H1 (cell line): ENCODE measurements at regions of chr6 and their contacts with region 1.

Region 1: DNA sequence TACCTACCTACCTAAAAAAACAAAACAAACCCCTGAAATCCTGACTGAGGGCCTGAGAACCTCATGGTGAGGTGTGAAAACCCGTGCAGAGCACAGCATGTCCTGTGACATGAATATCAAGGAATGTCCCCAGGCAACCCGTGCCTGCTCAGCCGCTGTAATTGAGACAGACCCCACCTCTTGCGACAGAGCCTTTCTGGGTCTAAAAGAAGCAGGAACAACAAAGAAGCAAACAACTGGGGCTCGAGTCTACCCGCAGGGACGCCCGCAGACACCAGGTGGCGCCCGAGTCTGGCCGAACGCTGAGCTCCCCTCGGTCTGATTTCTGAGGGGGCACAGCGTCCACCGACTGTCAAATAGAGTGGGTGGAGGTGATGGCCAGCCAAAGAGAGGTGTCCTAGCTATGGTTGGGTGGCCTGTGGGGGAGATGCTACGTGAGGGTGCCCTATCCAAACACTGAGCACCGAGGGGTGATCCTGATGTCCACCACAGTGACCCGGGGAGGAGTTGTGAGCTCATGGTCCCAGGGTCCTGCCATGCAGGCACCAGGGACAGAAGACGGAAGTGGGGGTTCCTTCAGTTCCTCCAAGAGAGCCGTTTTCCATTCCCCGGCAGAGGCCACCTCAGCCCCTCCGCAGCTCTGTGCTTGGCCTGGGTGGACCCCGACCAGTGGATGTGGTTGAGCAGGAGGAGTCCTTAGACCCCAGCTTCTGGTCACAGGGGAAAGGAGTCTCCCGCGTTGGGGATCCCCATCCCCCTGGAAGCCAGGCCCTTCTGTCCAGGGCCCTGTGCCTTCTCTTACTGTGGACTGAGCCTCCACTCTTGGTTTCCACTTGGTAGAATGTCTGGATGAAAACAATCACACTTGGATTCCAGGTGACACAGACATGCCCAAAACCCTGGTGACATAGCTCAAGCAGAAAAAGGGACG is 268.2 kb downstream of the CDC5L start:
- DNase-seq: peak; percentile 77 to 97
- H3K4me3 ChIP-seq: no peak overlapping the region
- H3K27ac ChIP-seq: no peak overlapping the region
- H3K4me1 ChIP-seq: no peaks in the 10 kb centered on the region; a peak in 3 of 7 replicates
- H3K27me3 ChIP-seq: no peaks in the 10 kb centered on the region; a peak in 1 of 7 replicates
- CTCF ChIP-seq: peak; percentile 88 to 94 (median 91)
- EP300 ChIP-seq: no peak
- POLR2A ChIP-seq: no peak
- RAD21 ChIP-seq: peak; percentile 99 to 100

Region 2: GRCh38 chr6:44475779-44476434 is 179.8 kb before region 1 on chr6:
- CTCF ChIA-PET with region 1: interaction called, 30 read pairs
- POLR2A ChIA-PET with region 1: interaction called, 4 read pairs
- DNase-seq: peak; percentile 73 to 94
- H3K4me3 ChIP-seq: no peak overlapping the region
- H3K27ac ChIP-seq: peak overlapping the region; percentile 66; the same call in 1 of the 2 replicates
- H3K4me1 ChIP-seq: peaks cover under 1 to 15% (median 11%) of the 10 kb centered on the region in 4 experiments
- H3K27me3 ChIP-seq: no peaks in the 10 kb centered on the region
- CTCF ChIP-seq: peak in 2 of 3 experiments; percentile 92 to 98; a peak in 3 of 4 replicates
- EP300 ChIP-seq: peak in 1 of 2 experiments; percentile 62; a peak in 1 of 3 replicates
- POLR2A ChIP-seq: peak in 1 of 2 experiments; percentile 25; a peak in 2 of 3 replicates
- RAD21 ChIP-seq: peak; percentile 99 to 100

Region 3: GRCh38 chr6:44556046-44556445 is 99.6 kb before region 1 on chr6:
- CTCF ChIA-PET with region 1: no interaction called
- POLR2A ChIA-PET with region 1: no interaction called
- DNase-seq: no peak
- H3K4me3 ChIP-seq: no peak overlapping the region
- H3K27ac ChIP-seq: no peak overlapping the region
- H3K4me1 ChIP-seq: peaks cover 0 to 8% (median 0%) of the 10 kb centered on the region in 4 experiments; a peak in 2 of 7 replicates
- H3K27me3 ChIP-seq: no peaks in the 10 kb centered on the region
- CTCF ChIP-seq: no peak
- EP300 ChIP-seq: no peak
- POLR2A ChIP-seq: no peak
- RAD21 ChIP-seq: no peak

Region 4: GRCh38 chr6:44630125-44631028 is 25.3 kb before region 1 on chr6:
- CTCF ChIA-PET with region 1: interaction called, 64 read pairs
- POLR2A ChIA-PET with region 1: no interaction called
- DNase-seq: peak in 1 of 2 experiments; percentile 77
- H3K4me3 ChIP-seq: no peak overlapping the region
- H3K27ac ChIP-seq: no peak overlapping the region
- H3K4me1 ChIP-seq: peaks cover 8 to 19% (median 13%) of the 10 kb centered on the region in 4 experiments
- H3K27me3 ChIP-seq: peaks cover 0 to 4% (median 0%) of the 10 kb centered on the region in 4 experiments; a peak in 2 of 7 replicates
- CTCF ChIP-seq: peak; percentile 67 to 87 (median 80)
- EP300 ChIP-seq: no peak
- POLR2A ChIP-seq: no peak
- RAD21 ChIP-seq: peak; percentile 94 to 98

Region 5: DNA sequence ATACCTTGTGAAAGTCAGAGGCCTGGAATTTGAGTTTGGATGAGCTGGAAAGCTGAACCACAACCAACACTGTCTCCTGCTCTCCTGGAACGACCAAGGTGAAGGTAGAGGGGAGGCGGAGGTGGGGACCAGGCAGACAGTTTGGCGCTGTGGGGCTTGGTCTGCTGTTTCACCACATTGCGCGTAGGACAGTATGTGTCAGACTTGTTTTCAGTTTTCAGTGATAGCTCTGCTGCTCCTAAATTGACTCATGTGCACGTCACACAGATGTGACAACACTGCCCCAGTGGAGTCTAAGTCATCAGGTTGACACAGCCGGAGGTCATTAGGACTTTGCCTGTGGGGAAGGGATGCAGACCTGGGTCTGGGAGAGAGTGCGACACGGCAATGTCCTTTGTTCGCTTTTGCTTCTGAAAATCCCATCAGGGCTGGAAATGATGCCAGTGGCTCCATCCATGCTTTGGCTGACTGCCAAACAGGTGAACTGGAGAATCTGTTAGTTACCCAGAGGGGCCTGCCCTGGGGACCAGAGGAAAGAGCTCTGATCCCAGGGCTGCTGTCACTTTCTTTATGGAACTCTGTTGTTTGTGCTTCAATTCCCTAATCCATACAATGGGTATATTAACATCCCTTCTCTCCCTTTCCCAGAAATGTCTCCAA is 12.7 kb before region 1 on chr6:
- CTCF ChIA-PET with region 1: interaction called, 12 read pairs
- POLR2A ChIA-PET with region 1: interaction called, 4 read pairs
- DNase-seq: no peak
- H3K4me3 ChIP-seq: no peak overlapping the region
- H3K27ac ChIP-seq: no peak overlapping the region
- H3K4me1 ChIP-seq: no peaks in the 10 kb centered on the region
- H3K27me3 ChIP-seq: no peaks in the 10 kb centered on the region
- CTCF ChIP-seq: no peak
- EP300 ChIP-seq: no peak
- POLR2A ChIP-seq: no peak
- RAD21 ChIP-seq: no peak

Region 6: DNA sequence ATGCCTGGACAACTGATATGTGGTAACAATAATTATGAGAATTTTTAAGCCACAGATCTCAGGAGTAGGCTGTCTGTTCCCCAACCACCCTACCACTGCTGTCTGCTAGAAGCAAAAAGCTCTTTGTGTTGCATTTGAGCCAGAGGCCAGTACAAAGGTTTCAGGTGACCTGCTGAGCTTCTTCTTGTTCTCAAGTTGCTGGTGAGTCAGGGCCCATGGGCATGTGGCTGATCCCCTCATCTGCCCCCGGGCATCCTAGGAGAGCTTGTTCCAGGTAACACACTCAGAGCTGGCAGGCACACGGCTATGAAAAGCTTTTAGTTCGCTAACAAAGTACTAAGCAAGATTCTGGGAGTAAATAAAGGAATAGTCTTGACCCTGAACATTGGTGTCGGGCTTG is 17.2 kb after region 1 on chr6:
- CTCF ChIA-PET with region 1: interaction called, 29 read pairs
- POLR2A ChIA-PET with region 1: interaction called, 5 read pairs
- DNase-seq: no peak
- H3K4me3 ChIP-seq: no peak overlapping the region
- H3K27ac ChIP-seq: no peak overlapping the region
- H3K4me1 ChIP-seq: peaks cover 0 to 15% (median 10%) of the 10 kb centered on the region in 4 experiments; a peak in 4 of 7 replicates
- H3K27me3 ChIP-seq: no peaks in the 10 kb centered on the region
- CTCF ChIP-seq: no peak
- EP300 ChIP-seq: no peak
- POLR2A ChIP-seq: no peak
- RAD21 ChIP-seq: no peak

Region 7: DNA sequence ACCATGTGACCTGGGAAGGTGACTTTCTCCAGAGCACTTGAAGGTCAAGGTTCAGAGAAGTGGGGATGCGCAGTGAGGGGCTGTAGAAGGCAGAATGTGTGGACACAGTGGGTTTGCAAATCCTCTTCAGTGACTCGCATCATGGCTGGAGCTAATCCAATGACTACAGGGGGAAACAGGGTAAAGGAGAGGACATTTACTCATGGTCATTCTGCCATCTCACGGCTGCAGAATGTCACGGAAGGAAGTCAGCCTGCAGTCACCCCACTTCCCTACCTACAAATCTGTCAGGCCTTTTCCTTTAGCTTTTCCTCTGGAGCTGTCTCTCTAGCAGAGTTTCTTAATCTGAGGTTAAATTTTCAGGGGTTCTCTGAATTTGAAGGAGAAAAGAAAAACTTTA is 69.4 kb after region 1 on chr6:
- CTCF ChIA-PET with region 1: no interaction called
- POLR2A ChIA-PET with region 1: no interaction called
- DNase-seq: no peak
- H3K4me3 ChIP-seq: no peak overlapping the region
- H3K27ac ChIP-seq: no peak overlapping the region
- H3K4me1 ChIP-seq: no peaks in the 10 kb centered on the region; a peak in 1 of 7 replicates
- H3K27me3 ChIP-seq: no peaks in the 10 kb centered on the region
- CTCF ChIP-seq: no peak
- EP300 ChIP-seq: no peak
- POLR2A ChIP-seq: no peak
- RAD21 ChIP-seq: no peak

Region 8: GRCh38 chr6:44779130-44779826 is 123.6 kb after region 1 on chr6:
- CTCF ChIA-PET with region 1: interaction called, 23 read pairs
- POLR2A ChIA-PET with region 1: no interaction called
- DNase-seq: no peak
- H3K4me3 ChIP-seq: no peak overlapping the region
- H3K27ac ChIP-seq: no peak overlapping the region
- H3K4me1 ChIP-seq: no peaks in the 10 kb centered on the region
- H3K27me3 ChIP-seq: no peaks in the 10 kb centered on the region
- CTCF ChIP-seq: no peak
- EP300 ChIP-seq: no peak
- POLR2A ChIP-seq: no peak
- RAD21 ChIP-seq: no peak

Region 9: DNA sequence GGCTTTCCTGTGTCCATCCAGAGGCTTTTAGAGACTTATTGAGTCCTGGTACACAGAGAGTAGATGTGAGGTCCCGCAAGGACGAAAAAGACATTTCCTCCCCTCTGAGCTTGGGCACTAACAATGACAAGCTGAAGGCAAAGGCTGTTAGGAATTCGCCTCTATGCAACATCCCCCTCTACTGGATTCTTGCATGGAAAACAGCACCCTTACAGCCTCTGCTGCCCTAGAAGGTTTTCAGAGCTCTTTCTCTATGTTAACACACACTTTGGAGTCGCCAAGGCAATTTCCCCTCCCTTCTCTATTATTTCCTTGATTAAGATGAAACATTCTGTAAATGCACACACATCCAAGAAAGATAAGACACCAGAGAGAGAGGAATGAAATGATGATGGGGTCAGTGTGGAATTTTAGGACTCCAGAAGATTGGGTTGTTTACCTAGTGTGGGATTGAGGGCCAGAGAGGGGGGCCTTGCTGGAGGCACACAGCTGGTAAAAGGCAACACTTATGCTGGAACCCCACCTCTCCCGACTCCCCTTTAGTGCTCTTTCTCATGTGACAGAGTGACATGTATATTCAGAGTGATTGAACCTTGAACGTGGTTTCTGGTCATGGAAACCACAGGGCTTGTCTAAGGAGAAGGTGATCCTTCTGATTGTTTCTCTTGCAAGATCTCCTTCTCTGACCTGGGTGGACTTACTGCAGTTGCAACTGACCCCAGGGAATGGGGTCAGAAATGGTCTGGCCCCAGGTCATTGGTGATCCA is 1059.2 kb after region 1 on chr6:
- CTCF ChIA-PET with region 1: interaction called, 22 read pairs
- POLR2A ChIA-PET with region 1: no interaction called
- DNase-seq: peak; percentile 49 to 75
- H3K4me3 ChIP-seq: no peak overlapping the region
- H3K27ac ChIP-seq: no peak overlapping the region
- H3K4me1 ChIP-seq: 0 out of 7 replicates have a peak, but pooled peaks cover 0 to 2% (median 0%) of the 10 kb centered on the region in 4 experiments
- H3K27me3 ChIP-seq: peaks cover 0 to 2% (median 0%) of the 10 kb centered on the region in 4 experiments; a peak in 1 of 7 replicates
- CTCF ChIP-seq: peak; percentile 3 to 86 (median 76)
- EP300 ChIP-seq: no peak
- POLR2A ChIP-seq: no peak
- RAD21 ChIP-seq: peak; percentile 98